Pancreas (tissue), 10 donors: ENCODE measurements at regions of chr2 and their contacts with region 1.

Region 1: GRCh38 chr2:128736689-128737545 is 418.2 kb upstream of the HS6ST1 start:
- DNase-seq: peak; percentile 73 to 96 (median 84)
- ATAC-seq: peak; percentile 86 to 97 (median 94)
- H3K4me3 ChIP-seq: peak overlapping the region in 2 of 4 donors; percentile 18 to 39
- H3K27ac ChIP-seq: no peak overlapping the region
- H3K4me1 ChIP-seq: peaks cover 0 to 12% (median 0%) of the 10 kb centered on the region in 3 donors
- H3K27me3 ChIP-seq: no peaks in the 10 kb centered on the region
- CTCF ChIP-seq: peak; percentile 98 to 100 (median 100)

Region 2: DNA sequence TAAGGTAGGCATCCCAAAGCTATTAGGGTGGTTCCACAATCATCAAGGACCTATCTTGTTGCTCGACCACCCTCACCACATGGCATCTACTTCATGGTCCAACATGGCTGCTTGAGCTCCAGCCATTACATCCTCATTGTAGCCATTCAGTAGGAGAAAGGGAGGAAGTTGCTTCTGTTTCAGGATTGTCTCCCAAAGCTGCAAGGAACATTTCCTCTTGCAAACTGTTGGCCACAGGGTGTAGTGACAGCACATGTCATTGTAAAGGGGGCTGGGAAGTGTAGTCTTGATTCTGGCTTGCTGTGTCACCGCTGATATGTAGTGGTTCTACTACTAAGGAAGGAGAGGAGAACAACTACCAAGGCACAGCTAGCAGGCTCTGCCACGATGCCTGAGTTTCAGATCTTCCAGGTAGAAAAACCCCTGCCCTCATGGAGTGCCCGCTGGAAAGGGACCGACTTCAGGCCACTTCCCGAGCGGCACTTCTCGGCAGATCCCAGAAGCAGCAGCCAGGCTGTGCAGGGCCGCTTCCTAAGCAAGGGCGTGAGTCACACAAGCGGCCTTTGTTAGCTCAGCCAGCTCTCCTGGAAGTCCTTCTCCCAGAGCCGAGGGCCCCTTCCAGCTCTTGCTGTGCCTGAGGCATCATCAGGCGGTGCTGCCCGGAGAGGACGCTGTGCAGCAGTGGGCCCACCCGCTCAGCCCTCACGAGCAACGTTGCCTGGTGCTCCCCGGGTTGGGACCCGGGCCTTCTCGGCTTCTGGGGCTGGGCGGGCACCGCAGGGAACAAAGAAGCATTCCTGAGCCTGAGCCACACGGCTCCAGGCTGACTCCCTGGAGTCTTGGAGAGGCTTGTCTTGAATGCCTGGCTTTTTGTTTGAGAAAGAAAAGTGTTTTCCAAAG is 476.4 kb before region 1 on chr2:
- intact Hi-C with region 1: no loop called
- DNase-seq: peak in 3 of 6 donors; percentile 30 to 71 (median 56)
- ATAC-seq: peak in 3 of 4 donors; percentile 57 to 64 (median 63)
- H3K4me3 ChIP-seq: no peak overlapping the region
- H3K27ac ChIP-seq: no peak overlapping the region
- H3K4me1 ChIP-seq: no peaks in the 10 kb centered on the region
- H3K27me3 ChIP-seq: no peaks in the 10 kb centered on the region
- CTCF ChIP-seq: no peak

Region 3: GRCh38 chr2:128623776-128624424 is 113.0 kb before region 1 on chr2:
- intact Hi-C with region 1: no loop called
- DNase-seq: peak in 1 of 6 donors; percentile 21
- ATAC-seq: peak in 1 of 4 donors; percentile 47
- H3K4me3 ChIP-seq: no peak overlapping the region
- H3K27ac ChIP-seq: no peak overlapping the region
- H3K4me1 ChIP-seq: no peaks in the 10 kb centered on the region
- H3K27me3 ChIP-seq: no peaks in the 10 kb centered on the region
- CTCF ChIP-seq: no peak

Region 4: DNA sequence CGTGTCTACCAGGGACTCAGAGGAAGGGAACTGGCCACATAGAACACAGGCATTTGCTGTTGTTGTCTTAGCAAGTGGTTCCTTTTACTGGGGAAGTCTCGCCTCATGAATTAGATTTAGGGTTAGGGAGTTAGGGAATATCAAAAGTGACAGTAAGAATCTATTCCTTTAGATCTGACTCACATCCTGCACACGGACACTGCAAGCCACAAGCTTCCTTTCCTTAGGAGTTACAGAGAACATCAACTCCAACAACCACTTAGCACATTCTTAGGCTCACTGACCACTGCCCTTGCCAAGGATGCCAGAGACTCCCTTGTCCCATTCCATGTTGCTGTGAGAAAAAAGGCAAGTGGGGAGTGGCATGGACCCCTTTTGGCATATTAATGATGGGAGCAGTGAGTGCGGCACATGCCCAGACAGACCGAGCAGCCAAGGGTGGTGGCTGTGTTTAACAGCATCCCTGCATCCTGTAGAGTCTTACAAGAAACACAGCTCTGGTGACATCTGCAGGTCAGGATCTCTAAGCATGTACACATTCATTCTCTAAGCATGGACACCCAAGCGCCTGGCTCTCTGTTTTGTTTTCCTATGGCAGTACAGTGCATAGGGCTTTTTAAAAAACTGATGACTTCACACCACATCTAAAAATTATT is 497.0 kb after region 1 on chr2:
- intact Hi-C with region 1: loop called in 1 of 3 experiments (anchors 10 kb)
- DNase-seq: peak in 3 of 6 donors; percentile 10 to 33 (median 13)
- ATAC-seq: peak; percentile 53 to 91 (median 79)
- H3K4me3 ChIP-seq: no peak overlapping the region
- H3K27ac ChIP-seq: no peak overlapping the region
- H3K4me1 ChIP-seq: no peaks in the 10 kb centered on the region
- H3K27me3 ChIP-seq: no peaks in the 10 kb centered on the region
- CTCF ChIP-seq: no peak